ENCODE measurements at regions of chr1 and their contacts with region 1.

Region 1: GRCh38 chr1:7667625-7668218 is 103.4 kb upstream of the VAMP3 start:
- DNase-seq: peak; percentile 88
- H3K4me3 ChIP-seq: peak overlapping the region in 1 of 2 experiments; percentile 58; a peak in 2 of 4 replicates
- H3K27ac ChIP-seq: peak overlapping the region; percentile 72 to 100
- H3K4me1 ChIP-seq: peaks cover 5 to 53% of the 10 kb centered on the region in 2 experiments; a peak in 3 of 4 replicates
- H3K27me3 ChIP-seq: no peaks in the 10 kb centered on the region
- CTCF ChIP-seq: peak; percentile 94
- EP300 ChIP-seq: no peak
- RAD21 ChIP-seq: peak; percentile 98

Region 2: DNA sequence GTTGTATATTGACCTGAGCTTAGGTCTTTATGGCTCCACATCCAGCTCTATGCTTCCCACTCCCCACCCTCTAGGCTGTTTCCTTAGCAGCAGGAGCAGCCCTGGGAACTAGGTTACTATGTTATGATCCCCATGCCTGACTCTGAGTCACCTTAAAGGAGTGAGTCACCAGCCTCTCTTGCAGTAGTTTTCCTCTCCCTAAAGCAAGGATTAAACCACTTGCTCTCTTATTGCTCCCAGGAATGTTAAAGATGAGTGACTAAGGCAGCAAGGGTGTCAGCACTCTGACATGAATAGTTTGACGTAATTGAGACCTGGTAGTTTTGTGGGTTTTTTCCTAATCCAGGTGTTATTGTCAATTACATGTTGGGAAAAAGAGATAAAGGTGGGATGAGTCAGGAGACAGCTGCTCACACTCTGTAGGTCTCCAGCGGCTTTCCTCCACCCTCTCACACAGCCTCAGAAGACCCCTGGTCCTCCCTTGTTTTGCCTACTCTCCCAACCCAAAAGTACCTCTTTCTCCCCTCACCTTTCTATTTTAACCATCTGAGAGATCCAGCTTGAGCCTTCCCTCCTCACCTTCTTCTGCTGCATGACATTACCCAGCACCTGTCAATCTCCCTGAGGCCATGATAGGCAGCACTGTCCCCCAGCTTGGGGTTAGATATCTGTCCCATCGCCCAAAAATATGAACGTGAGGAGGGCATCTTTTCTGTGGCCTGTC is 265.7 kb before region 1 on chr1:
- CTCF ChIA-PET with region 1: no interaction called
- POLR2A ChIA-PET with region 1: no interaction called
- DNase-seq: peak; percentile 22
- H3K4me3 ChIP-seq: no peak overlapping the region
- H3K27ac ChIP-seq: peak overlapping the region in 1 of 2 experiments; percentile 76; a peak in 2 of 4 replicates
- H3K4me1 ChIP-seq: peaks cover 0 to 6% of the 10 kb centered on the region in 2 experiments; a peak in 3 of 4 replicates
- H3K27me3 ChIP-seq: no peaks in the 10 kb centered on the region
- CTCF ChIP-seq: no peak
- EP300 ChIP-seq: peak in 1 of 2 experiments; percentile 70; a peak in 2 of 4 replicates
- RAD21 ChIP-seq: no peak

Region 3: DNA sequence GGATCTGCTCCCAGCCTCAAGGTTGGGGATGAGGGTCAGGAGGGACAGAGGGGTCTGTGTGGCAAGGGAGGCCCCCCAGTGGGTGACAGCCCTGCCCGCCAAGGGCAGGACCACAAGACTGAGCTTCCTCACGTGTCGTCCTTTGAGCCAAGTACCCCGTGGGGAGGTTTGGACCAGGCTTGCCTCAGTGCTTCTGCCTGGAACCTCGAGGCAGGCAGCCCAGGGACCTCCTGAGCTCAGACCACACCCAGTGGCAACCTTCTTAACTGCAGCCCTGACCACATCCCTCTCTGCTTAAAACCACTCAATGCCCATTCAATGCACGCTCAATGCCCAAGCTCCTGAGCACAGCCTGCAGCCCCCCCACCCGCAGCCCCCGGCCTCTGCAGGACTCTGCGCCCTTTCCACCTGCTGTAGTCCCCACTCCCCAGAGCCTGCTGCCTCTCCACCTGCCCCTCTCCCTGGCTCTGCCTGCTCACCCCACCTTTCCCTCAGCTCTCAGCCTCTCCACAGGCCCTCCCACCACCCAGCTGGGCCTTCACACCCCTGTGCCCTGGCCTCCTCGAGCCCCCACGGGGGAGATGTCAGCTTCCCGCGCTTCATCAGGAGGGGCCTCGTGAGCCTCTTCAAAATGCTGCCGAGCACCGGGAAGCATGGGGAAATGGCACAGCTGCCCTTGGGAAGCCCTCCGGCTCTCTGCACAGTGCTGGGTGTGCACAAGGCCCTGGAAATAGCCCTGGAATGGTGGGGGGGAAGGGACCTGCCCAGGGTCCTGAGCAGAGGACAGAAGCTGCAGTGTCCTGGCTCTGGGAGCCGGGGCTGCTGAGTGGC is 25.9 kb before region 1 on chr1:
- CTCF ChIA-PET with region 1: interaction called, 19 read pairs
- POLR2A ChIA-PET with region 1: interaction called, 3 read pairs
- DNase-seq: no peak
- H3K4me3 ChIP-seq: no peak overlapping the region
- H3K27ac ChIP-seq: peak overlapping the region in 1 of 2 experiments; percentile 81; a peak in 2 of 4 replicates
- H3K4me1 ChIP-seq: peaks cover 0 to 71% of the 10 kb centered on the region in 2 experiments; a peak in 1 of 4 replicates
- H3K27me3 ChIP-seq: no peaks in the 10 kb centered on the region
- CTCF ChIP-seq: no peak
- EP300 ChIP-seq: no peak
- RAD21 ChIP-seq: peak; percentile 31

Region 4: DNA sequence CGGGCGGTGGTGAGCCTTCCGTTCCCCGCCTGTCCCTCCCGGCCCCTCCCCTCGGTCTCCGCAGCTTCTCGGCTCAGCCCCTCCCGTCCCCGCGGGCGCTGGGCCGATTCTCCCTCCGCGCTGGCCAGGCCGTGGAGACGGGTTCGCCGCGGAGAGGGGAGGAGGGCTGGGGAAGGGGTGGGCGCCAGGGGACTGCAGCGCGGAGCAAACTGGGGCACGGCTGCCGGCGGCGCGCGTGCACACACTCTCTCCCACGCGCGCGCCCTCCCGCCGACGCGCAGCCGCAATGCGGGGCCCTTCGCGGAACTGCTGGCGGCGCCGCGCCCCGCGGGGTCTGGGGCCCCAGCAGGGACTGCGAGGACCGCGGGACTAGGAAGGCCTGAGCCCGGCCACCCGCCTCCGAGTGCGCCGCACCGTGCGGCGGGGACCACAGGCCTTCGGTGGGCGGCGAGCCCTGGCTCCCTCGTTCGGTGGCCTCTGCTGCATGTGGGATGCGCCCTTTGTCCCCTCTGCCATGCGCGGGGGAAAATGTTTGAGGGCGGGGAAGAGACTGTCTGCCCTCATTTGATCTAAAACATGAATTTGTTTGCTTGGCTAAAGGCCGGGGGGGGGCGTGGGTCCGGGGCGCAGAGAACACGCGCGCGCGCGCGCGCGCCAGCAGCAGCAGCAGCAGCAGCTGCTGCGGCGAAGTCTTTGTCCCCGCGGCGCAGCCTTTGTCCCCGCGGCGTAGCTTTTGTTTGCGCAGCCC is 12.7 kb after region 1 on chr1:
- CTCF ChIA-PET with region 1: interaction called, 112 read pairs
- POLR2A ChIA-PET with region 1: interaction called, 105 read pairs
- DNase-seq: peak; percentile 93
- H3K4me3 ChIP-seq: peak overlapping the region; percentile 56 to 61
- H3K27ac ChIP-seq: peak overlapping the region in 1 of 2 experiments; percentile 87; a peak in 2 of 4 replicates
- H3K4me1 ChIP-seq: peaks cover 0 to 47% of the 10 kb centered on the region in 2 experiments; a peak in 1 of 4 replicates
- H3K27me3 ChIP-seq: no peaks in the 10 kb centered on the region
- CTCF ChIP-seq: no peak
- EP300 ChIP-seq: no peak
- RAD21 ChIP-seq: no peak

Region 5: GRCh38 chr1:7710859-7711258 is 43.1 kb after region 1 on chr1:
- CTCF ChIA-PET with region 1: interaction called, 58 read pairs
- POLR2A ChIA-PET with region 1: interaction called, 60 read pairs
- DNase-seq: no peak
- H3K4me3 ChIP-seq: no peak overlapping the region
- H3K27ac ChIP-seq: no peak overlapping the region
- H3K4me1 ChIP-seq: no peaks in the 10 kb centered on the region; a peak in 1 of 4 replicates
- H3K27me3 ChIP-seq: peaks cover 2% of the 10 kb centered on the region; the same call in 1 of the 2 replicates
- CTCF ChIP-seq: no peak
- EP300 ChIP-seq: no peak
- RAD21 ChIP-seq: no peak

Region 6: GRCh38 chr1:7733276-7733675 is 65.6 kb after region 1 on chr1:
- CTCF ChIA-PET with region 1: interaction called, 739 read pairs
- POLR2A ChIA-PET with region 1: no interaction called
- DNase-seq: no peak
- H3K4me3 ChIP-seq: no peak overlapping the region
- H3K27ac ChIP-seq: no peak overlapping the region
- H3K4me1 ChIP-seq: peaks cover 0 to under 1% of the 10 kb centered on the region in 2 experiments; a peak in 1 of 4 replicates
- H3K27me3 ChIP-seq: no peaks in the 10 kb centered on the region
- CTCF ChIP-seq: no peak
- EP300 ChIP-seq: no peak
- RAD21 ChIP-seq: no peak

Region 7: GRCh38 chr1:7783826-7784491 is 116.2 kb after region 1 on chr1 and contains the start of gene PER3:
- CTCF ChIA-PET with region 1: interaction called, 54 read pairs
- POLR2A ChIA-PET with region 1: no interaction called
- DNase-seq: peak; percentile 98
- H3K4me3 ChIP-seq: peak within 1 kb of the TSS; percentile 41 to 61
- H3K27ac ChIP-seq: peak within 1 kb of the TSS; percentile 29 to 82; a peak in 3 of 4 replicates
- H3K4me1 ChIP-seq: peaks cover 0 to 6% of the 10 kb centered on the region in 2 experiments; a peak in 1 of 4 replicates
- H3K27me3 ChIP-seq: no peaks in the 10 kb centered on the region
- CTCF ChIP-seq: no peak
- EP300 ChIP-seq: no peak
- RAD21 ChIP-seq: no peak
- polyA plus RNA-seq, gene PER3: 6.0 and 7.3 TPM in 2 replicates

Region 8: DNA sequence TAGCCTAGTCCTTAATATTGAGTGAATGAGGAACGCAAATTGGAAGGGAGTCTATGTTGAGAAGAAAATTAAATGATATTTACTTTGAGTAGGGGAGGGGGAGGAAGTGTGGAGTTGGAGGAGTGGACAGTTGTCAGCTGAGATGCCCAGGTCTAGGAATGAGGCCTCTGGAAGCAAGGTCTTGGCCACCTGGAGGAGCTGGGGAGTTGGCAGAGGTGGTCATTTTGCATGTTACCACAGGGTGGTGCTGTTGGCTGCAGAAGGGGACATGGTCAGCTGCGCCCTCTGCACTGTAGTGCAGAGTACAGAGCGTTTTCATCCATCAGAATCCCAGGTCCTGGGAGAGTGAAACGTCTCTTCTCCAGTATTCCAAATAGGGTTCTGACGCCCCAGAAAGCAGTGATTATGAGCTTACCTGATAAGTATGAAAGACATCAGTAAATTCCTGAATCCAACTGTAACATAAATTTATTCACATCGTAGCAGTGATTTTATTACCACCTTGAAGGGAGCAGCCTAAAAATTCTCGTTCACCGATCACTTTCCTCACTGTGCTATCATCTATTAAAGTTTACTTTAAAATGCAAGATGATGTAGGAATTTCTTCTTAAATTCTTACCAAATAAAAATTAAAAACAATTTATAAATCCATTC is 307.6 kb after region 1 on chr1:
- CTCF ChIA-PET with region 1: interaction called, 13 read pairs
- POLR2A ChIA-PET with region 1: interaction called, 3 read pairs
- DNase-seq: peak; percentile 86
- H3K4me3 ChIP-seq: no peak overlapping the region
- H3K27ac ChIP-seq: no peak overlapping the region
- H3K4me1 ChIP-seq: no peaks in the 10 kb centered on the region
- H3K27me3 ChIP-seq: no peaks in the 10 kb centered on the region
- CTCF ChIP-seq: peak; percentile 79
- EP300 ChIP-seq: no peak
- RAD21 ChIP-seq: peak; percentile 81